Sciatic nerve (tissue), 2 donors: ENCODE measurements at regions of chr4 and their contacts with region 1.

Region 1: DNA sequence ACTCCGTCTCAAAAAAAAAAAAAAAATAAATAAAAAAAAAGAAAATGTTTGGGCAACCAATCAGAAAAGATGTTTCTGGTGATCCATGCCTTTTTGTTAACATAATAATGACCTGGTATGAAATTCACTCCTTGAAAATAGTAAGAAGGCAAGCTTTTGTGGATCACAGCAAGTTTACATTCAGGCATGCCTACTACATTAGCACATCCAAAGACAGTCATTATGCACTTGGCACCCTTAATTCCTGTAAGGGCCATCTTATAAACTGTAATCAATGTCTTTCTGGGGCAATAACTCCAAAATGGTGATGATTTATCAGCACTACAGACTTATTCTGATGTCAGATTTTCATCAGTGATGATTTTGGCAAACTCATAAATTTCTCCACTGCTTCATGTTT is 1871.6 kb upstream of the AGA start:
- DNase-seq: no peak
- ATAC-seq: no peak

Region 2: GRCh38 chr4:180721356-180721755 is 1407.5 kb after region 1 on chr4:
- intact Hi-C with region 1: loop called (anchors 5 kb)
- DNase-seq: no peak
- ATAC-seq: no peak